ENCODE measurements at regions of chr17 and their contacts with region 1.

Region 1: DNA sequence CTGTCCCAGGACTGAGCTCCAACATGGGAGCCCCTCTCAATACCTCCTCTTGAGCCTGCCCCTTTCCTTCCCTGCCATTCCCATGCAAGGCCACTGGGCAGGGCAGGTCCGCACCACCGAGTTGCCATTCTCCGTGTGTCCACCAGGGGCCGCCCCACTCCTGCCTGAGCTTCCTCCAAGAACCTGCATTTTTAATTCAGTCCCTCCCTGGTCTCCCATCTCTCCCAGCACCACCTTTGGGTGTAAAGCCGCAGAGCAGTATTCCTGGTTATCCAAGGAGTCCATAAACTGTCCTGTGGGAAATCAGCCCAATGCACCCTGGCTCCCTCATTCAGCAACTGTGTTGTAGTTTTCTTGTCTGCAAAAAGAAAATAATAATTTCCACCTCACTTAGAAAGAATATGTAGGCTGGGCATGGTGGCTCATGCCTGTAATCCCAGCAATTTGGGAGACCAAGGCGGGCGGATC is 15.9 kb upstream of the ANKRD40CL start:
- DNase-seq: peak; percentile 90
- ATAC-seq: peak; percentile 91

Region 2: GRCh38 chr17:50841949-50842354 is 58.7 kb after region 1 on chr17:
- intact Hi-C with region 1: loop called (anchors 2 kb)
- DNase-seq: peak; percentile 81
- ATAC-seq: peak; percentile 78

Region 3: DNA sequence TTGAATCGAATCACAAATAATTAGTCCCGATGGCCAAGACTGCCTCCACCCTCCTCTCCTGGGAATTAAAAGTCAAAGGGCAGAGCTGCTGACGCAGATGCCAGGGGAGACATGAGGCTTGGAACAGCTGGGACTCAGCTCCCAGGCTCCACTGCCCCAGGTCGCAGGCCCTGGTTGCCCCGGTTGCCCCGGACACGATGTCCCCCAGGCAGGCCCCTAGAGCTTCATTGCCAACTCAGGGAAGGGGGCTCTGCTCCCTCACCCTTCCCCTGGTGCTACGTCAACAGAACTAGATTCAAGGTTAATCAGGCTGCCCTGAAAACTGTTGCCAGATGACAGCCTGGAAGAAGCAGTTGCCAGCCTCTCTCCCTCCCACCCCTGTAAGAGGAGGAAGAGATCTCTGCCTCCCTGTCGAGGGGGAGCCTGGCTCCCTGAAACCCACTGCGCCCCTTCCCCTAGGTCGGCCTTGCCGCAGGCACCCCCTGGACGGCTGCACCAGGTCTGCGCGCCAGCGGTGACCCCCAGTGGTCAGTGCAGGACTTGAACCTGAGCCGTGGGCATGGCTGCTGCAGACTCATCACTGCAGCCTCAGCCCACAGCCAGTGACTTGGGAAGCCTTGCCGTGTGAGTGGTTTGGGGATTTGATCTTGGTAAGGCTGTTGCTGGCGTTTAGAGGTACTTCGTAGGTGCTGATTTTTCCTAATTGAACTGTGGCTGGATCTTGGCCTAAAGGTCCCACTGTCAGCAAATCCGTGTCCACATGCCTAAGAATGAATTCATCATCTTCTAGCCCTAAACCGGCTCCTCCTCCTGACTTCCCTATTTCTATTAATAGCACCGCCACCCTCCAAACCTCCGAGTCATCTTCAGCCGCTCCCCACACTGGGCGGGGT is 167.0 kb after region 1 on chr17:
- intact Hi-C with region 1: loop called (anchors 5 kb)
- DNase-seq: peak; percentile 84
- ATAC-seq: peak; percentile 85

Measured in Right ventricle myocardium superior (tissue), 1 donor.